Cardiac septum (tissue), 1 donor: ENCODE measurements at regions of chr2 and their contacts with region 1.

Region 1: GRCh38 chr2:69914170-69914960 is 544 bp upstream of the MXD1 start:
- DNase-seq: peak; percentile 100

Region 2: GRCh38 chr2:69253033-69253535 is 661.3 kb before region 1 on chr2:
- intact Hi-C with region 1: no loop called
- DNase-seq: no peak

Region 3: GRCh38 chr2:70070541-70071268 is 156.3 kb after region 1 on chr2:
- intact Hi-C with region 1: loop called (anchors 2 kb)
- DNase-seq: peak; percentile 80

Region 4: DNA sequence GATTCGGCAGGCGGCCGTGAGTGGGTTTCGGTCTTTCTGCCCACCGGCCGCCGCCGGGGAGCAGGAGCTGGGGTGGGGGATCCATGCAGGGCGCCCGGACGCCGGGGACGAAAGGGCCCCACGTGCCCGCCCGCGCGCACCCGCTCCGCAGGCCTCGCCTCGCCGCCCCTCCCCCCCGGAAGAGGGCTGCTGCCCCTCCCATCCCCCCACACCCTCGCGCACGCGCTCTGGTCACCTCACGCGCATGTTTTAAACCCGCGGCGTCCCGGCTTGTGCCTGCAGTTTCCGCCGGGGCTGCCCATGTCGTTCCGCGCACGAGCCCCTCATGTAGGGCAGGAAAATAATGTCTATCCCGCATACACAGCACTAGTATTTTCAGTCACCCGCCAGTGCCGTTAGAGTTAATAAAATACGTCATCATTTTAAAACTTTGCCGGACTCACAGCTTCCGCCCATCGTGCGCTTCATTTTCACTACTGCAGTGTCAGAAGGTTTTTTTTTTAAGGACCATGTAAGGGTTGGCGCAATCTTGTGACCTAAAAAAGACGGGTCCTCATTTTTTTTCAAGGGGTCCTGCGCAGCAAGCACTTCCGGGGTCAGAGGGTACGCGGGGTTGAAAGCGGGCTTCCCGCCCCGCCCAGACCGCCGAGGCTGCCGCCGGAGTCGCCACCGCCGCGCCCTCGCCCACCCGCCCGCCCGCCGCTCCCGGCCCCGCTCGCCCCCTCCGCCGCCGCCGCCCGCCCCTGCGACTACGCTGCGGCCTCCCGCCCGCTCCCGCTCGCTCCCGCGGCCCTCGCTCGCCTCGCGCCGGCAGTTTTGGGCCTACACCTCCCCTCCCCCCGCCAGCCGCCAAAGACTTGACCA is 172.7 kb after region 1 on chr2 and contains the start of gene PCBP1:
- intact Hi-C with region 1: loop called (anchors 1 kb)
- DNase-seq: peak; percentile 96
- total RNA-seq, gene PCBP1: 223 TPM

Region 5: DNA sequence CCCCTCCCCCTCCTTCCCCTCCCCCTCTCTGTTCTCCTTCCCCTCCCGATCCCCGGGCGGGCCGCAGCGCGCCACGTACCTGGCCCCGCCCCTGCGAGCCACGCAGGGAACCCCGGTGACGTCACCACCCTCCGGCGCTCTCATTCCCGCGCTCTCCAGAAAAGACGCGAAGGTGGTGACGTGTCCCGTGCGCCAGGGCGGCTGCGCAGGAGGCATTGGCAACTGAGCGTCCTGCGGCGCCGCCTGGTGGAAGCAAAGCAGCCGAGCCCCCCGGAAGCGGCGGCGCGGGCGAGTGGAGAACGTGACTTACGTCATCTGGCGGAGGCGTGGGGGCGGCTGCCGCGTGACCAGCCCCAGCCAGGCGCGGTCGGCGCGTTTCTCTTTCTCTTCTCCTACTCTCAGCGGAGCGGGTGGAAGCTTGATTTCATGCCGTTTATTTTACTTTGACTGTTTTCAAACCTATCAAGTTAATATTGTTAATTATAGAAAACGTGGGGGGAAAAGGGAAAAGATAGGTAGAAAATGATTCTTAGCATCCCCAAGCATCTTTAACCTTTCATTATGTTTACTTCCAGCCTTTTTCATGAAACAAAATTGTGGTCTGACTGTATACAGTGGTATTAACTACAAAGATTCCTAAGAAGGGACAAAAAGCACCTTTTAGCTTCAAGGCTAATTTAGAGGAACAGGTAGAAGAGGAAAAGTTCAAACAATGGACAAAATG is 228.4 kb after region 1 on chr2:
- intact Hi-C with region 1: loop called (anchors 1 kb)
- DNase-seq: peak; percentile 99

Region 6: GRCh38 chr2:70190418-70191243 is 276.3 kb after region 1 on chr2 and contains the start of gene C2orf42:
- intact Hi-C with region 1: loop called (anchors 5 kb)
- DNase-seq: peak; percentile 96
- total RNA-seq, gene C2orf42: 12.3 TPM

Region 7: GRCh38 chr2:70248181-70248847 is 333.9 kb after region 1 on chr2 and contains the start of gene TIA1:
- intact Hi-C with region 1: loop called (anchors 5 kb)
- DNase-seq: peak; percentile 99
- total RNA-seq, gene TIA1: 49.4 TPM

Region 8: GRCh38 chr2:70301344-70302194 is 387.2 kb after region 1 on chr2 and contains the start of gene FAM136A:
- intact Hi-C with region 1: loop called (anchors 5 kb)
- DNase-seq: peak; percentile 96
- total RNA-seq, gene FAM136A: 21.3 TPM